Right ventricle myocardium inferior (tissue), 1 donor: ENCODE measurements at regions of chr2 and their contacts with region 1.

Region 1: DNA sequence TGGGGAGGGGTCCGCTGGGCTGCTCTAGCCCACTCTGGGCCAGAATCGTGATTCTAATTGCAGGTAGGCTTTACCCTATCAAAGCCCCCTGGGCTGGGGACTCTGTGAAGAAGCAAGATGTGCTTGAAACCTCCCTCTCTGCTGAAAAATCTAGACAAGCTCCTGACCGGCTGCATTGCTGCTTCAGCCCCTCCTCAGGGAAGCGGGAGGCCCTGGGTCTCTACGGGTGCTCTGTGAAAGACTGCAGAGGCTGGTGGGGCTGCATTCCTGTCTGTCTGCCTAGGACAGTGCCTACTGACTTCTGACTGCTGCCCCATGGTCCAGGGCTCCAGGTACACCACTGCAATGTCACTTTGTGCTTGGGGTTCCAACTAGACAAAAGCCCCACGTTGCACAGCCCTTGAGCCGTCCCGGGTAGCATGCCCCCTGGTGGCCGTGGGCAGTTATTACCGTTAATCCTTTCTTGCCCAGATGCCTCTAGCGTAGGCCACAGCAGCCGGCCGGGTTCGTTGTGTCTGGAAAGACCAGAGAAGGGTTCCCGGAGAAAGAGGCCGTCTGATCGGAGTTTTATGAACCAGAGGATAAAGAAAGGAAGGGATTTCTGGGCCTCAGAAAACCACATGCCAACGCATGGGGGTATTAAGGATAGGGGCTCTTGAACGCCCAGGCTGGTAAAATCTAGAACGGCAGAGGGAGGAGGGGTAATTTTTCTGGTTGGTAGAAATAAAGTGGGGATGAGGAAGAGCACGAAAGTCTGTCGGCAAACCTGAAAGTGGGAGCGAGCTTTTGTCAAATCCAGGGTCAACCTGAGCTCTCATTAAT is 15.9 kb upstream of the C1QL2 start:
- DNase-seq: no peak
- ATAC-seq: no peak

Region 2: DNA sequence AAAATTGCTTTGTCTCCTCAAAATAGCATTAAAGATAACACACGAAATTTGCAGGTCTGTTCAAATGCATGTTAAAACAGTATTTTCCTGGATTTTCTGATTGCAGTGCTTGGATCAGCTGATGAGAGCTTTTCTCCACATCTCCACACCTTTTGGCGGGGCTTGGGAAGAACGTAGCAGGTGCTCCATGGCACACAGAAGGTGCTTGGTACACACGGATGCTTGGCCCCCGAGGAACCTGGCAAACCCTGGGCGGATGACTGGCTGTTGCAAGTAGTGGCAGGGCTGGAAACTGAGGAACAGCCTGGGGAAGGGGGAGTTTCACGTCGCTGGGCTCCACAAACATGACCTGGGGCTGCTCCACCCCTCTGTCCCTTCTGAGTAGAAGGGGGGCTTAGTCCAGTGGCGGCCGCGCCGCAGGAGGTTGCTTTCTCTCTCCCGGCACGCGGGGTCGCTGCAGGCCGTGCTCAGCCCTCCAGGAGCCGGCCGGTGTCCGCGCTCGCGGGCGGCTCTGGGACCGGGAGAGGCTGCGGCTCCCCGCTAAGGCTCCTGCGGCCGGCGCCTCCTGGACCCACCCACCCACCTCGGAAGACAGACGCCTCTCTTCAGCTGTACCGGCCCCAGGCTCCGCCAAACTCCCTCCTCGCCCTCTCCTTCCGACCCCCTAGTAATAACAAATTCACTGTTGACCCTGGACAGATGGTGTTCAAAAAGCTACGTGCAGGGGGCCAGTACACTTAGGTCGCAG is 163.1 kb before region 1 on chr2:
- intact Hi-C with region 1: loop called (anchors 5 kb)
- DNase-seq: peak; percentile 62
- ATAC-seq: peak; percentile 85

Region 3: GRCh38 chr2:119208791-119209203 is 34.4 kb after region 1 on chr2:
- intact Hi-C with region 1: no loop called
- DNase-seq: no peak
- ATAC-seq: no peak

Region 4: DNA sequence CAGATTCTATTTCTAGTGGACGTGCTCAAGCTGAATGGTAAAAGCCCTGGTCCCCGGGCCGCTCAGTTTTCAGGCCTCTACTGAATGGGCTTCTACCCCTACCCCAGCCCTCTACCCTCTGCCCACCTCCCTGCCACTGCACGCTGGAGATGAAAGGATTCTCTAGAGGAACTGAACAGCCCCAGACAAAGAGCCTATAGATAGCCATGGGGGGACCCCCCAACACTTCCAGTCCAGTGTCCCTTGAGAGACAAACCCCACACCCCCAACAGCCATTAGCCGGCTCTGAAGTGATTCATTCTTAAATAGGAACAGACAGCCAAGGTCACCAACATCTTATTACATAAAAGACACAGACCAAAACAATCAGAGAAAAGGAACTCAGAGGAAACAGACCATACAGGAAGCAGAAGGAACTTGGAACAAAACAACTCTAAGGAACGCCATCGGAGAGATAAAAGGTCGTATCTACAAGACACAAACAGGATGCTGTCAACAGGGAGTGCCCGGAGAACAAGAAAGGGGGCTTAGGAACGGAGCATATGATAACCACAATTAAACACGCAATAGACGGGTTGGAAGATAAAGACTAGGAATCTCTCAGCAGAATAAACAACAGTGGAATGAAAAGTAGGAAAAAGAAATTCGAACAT is 280.8 kb after region 1 on chr2:
- intact Hi-C with region 1: no loop called
- DNase-seq: no peak
- ATAC-seq: no peak